ENCODE measurements at regions of chr1 and their contacts with region 1.

Region 1: GRCh38 chr1:61287734-61288133 is 205.4 kb downstream of the NFIA start:
- DNase-seq: peak; percentile 90
- H3K4me3 ChIP-seq: no peak overlapping the region
- H3K27ac ChIP-seq: peak overlapping the region; percentile 87
- H3K4me1 ChIP-seq: peaks cover 29% of the 10 kb centered on the region
- H3K27me3 ChIP-seq: no peaks in the 10 kb centered on the region
- CTCF ChIP-seq: no peak
- POLR2A ChIP-seq: no peak

Region 2: DNA sequence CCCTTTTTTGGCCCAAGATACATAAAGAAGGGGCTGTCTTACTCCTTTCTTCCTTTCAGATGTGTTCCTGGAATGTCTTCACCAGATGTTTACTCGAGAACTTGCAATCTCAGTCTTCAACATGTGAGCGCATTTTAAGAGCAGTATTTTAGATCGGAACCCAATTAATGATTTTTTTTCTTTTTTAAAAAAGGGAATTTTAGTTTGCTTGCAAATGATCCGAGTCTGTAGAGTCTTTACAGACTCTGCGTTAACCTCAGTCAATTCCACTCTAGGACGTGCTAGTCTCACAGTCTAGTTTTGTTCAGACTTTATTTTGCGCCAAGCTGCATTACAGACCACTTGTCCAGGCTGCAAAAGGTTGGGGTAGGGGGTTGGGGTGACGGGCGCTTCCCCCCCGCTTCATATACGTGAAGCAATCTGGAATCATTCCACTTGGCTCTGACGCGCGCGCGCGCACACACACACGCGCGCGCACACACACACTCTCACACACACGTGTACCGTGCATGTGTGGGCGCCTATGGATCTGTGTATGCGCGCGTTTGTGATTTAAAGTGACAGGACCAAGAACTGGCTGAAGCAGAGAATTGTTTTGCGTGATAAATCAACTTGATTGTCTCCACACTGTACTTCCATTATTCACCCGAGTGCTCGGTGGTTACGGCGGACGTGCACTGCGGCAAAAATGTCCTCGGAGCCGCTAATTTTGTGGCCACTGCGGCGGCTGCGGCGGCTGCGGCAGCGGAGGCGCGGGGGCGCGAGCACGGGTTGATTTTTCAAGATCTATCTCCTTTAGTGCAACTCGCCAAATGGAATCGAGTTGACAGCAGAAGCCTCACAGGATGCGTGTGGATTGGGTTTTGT is 230.9 kb before region 1 on chr1:
- CTCF ChIA-PET with region 1: no interaction called
- POLR2A ChIA-PET with region 1: no interaction called
- dilution Hi-C with region 1: no loop called
- intact Hi-C with region 1: loop called (anchors 2 kb)
- DNase-seq: peak; percentile 74
- H3K4me3 ChIP-seq: peak overlapping the region; percentile 69 to 77 (median 75)
- H3K27ac ChIP-seq: peak overlapping the region; percentile 45
- H3K4me1 ChIP-seq: peaks cover 8% of the 10 kb centered on the region
- H3K27me3 ChIP-seq: no peaks in the 10 kb centered on the region
- CTCF ChIP-seq: no peak
- POLR2A ChIP-seq: no peak

Region 3: DNA sequence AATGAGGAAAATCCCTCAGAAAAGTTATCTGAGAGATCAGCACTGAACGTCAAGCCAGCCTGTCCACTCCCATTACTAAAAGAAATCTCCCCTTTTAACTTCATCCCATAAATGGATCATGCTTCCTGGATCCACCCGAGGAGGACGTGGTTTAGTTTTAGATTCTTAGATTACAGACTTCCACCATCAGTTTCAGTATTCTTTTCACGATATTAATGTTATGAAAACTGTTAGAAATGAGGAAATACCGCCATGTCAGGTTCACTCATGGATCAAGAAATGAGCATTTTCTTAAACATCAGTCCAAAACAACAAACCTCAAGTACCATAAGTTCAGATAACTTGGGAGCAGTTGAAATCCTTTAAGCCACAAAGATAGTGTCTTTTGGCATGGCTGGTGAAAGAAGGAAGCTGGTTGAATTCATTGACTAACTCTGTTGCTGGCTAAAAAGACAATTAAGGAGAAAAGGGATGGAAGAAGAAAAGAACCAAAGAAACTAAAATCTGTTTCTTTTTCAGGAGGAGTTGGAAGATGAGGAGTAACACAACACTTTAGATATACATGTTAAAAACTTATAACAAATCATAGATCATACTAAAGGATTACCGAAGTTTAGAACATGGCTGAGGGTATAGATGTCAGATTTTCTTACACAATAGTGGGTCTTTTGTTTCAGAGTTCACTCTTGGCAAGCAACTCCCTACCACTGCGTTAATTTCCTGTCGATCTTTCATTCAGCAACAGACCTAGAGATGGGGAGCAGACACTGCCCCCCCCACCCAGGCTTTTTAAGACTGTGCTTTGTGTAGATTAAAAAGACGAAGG is 155.3 kb before region 1 on chr1:
- CTCF ChIA-PET with region 1: no interaction called
- POLR2A ChIA-PET with region 1: no interaction called
- dilution Hi-C with region 1: no loop called
- intact Hi-C with region 1: loop called (anchors 5 kb)
- DNase-seq: peak; percentile 91
- H3K4me3 ChIP-seq: peak overlapping the region in 1 of 3 experiments; percentile 53
- H3K27ac ChIP-seq: peak overlapping the region; percentile 75
- H3K4me1 ChIP-seq: peaks cover 23% of the 10 kb centered on the region
- H3K27me3 ChIP-seq: no peaks in the 10 kb centered on the region
- CTCF ChIP-seq: no peak
- POLR2A ChIP-seq: no peak

Region 4: GRCh38 chr1:61299463-61299862 is 11.7 kb after region 1 on chr1:
- CTCF ChIA-PET with region 1: interaction called, 4 read pairs
- POLR2A ChIA-PET with region 1: no interaction called
- dilution Hi-C with region 1: no loop called
- intact Hi-C with region 1: loop called (anchors 1 kb)
- DNase-seq: peak; percentile 90
- H3K4me3 ChIP-seq: no peak overlapping the region
- H3K27ac ChIP-seq: no peak overlapping the region
- H3K4me1 ChIP-seq: no peaks in the 10 kb centered on the region
- H3K27me3 ChIP-seq: no peaks in the 10 kb centered on the region
- CTCF ChIP-seq: no peak
- POLR2A ChIP-seq: no peak

Region 5: DNA sequence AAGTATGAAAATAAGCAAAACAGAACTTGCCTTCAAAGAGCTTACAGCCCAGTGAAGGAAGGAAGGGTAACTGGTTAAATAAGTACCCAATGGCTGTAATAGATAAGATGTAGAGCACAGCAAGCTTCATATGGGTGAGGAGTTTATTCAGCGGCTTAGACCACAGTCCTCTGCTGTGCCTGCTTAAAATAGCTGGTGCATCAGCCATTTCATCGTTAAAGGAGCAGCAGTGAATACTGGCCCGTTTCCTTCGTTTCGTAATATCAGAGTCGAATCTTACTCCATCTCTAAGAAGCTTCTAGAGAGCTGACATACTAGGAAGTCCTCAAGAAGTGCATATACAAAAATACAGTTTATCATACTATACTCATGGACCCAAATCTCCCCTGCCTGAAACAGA is 81.1 kb after region 1 on chr1:
- CTCF ChIA-PET with region 1: no interaction called
- POLR2A ChIA-PET with region 1: no interaction called
- dilution Hi-C with region 1: no loop called
- intact Hi-C with region 1: no loop called
- DNase-seq: no peak
- H3K4me3 ChIP-seq: no peak overlapping the region
- H3K27ac ChIP-seq: no peak overlapping the region
- H3K4me1 ChIP-seq: peaks cover 11% of the 10 kb centered on the region
- H3K27me3 ChIP-seq: no peaks in the 10 kb centered on the region
- CTCF ChIP-seq: no peak
- POLR2A ChIP-seq: no peak

Measured in endothelial cell of umbilical vein (primary cell).